ENCODE measurements at regions of chrX and their contacts with region 1.

Region 1: GRCh38 chrX:46758906-46759644 is at the start of gene SLC9A7:
- DNase-seq: peak; percentile 72
- CTCF ChIP-seq: peak; percentile 74

Region 2: DNA sequence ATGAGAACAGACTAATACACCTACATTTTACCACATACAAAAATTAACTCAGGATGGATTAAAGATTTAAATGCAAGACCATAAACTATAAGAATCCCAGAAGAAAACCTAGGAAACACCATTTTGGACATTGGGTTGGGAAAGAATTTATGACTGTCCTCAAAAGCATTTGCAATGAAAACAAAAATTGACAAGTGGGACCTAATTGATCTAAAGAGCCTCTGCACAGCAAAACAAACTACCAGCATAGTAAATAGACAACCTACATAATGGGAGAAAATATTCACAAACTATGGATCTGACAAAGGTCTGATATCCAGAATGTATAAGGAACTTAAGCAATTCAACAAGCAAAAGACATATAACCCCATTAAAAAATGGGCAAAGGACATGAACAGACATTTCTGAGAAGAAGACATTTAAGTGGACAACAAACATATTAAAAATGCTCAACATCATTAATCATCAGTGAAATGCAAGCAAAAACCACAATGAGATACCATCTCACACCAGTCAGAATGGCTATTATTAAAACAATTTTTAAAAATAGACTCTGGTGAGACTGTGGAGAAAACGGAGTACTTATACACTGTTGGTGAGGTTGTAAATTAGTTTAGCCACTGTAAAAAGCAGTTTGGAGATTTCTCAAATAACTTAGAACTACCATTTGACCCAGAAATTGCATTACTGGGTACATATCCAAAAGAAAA is 1336.7 kb before region 1 on chrX:
- CTCF ChIA-PET with region 1: no interaction called
- POLR2A ChIA-PET with region 1: no interaction called
- DNase-seq: no peak
- CTCF ChIP-seq: no peak

Region 3: DNA sequence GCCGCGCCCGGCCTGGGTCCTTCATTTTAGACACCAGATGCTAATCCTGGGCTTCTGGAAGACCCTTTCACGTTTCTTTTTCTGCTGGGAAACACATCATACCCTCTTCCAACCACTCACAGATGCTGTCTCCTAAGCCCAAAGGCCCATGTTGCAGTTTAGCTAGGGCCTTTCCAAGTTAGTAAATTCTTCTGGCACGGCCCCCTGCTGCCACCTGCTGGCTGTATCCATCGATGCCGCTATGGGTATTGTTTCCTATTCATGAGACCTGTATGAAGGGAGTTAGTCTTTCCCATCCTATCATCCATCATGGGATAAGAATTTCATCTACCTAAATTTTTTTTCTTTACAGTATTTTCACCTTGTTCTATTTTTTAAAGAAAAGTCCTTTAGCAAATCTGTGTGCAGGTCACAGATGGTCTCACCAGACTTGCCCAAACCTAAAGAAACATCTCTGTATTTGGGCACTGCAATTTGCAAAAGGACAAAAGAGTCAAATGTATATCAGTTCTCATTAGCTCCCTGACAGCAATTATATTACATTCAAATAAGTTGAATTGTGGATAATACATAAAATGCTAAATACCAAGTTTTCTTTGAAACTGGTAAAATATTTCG is 37.6 kb after region 1 on chrX:
- CTCF ChIA-PET with region 1: interaction called, 14 read pairs
- POLR2A ChIA-PET with region 1: no interaction called
- DNase-seq: peak; percentile 65
- CTCF ChIP-seq: peak; percentile 54

Measured in GM10248 (cell line).